ENCODE measurements at regions of chr14 and their contacts with region 1.

Region 1: DNA sequence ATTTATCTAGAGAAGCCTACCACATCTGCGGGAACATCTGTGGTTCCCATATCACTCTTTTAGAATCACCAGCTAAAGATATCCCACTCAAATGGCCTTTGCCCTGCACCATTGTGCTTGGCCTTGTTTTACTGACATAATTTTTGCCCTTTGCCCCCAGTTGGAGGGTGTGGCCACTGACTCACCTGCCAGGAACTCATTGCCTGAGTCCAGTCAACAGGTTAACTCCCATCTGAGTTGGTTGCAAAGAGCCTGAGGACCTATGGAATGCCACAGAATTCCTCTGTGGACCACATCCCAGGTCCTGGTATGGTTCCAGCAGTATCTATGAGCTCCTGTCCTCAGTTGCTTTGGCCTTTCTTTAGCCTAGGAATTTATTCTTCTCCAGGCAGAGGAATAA is 55.7 kb upstream of the PTGR2 start:
- DNase-seq: no peak
- CTCF ChIP-seq: no peak

Region 2: GRCh38 chr14:73809391-73809790 is 13.4 kb after region 1 on chr14:
- CTCF ChIA-PET with region 1: interaction called, 11 read pairs
- POLR2A ChIA-PET with region 1: no interaction called
- DNase-seq: no peak
- CTCF ChIP-seq: no peak

Region 3: DNA sequence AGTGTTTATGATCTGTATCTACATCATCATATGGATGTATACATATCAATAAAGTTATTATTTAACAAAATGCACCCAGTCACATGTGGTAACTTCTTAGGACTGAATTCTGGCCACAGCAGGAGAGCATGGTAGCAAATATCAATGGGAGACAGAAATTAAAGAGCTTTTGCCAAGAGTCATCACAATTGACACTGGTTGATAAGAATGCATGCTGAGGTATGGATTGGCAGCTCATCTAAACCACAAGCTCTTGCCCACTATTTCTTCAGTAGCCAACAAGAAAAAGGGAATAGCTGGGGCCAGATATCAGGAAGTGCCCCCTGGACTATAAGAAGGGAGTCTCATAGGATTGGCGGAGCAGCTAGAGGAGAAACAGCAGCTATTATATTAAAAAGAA is 46.2 kb after region 1 on chr14:
- CTCF ChIA-PET with region 1: no interaction called
- POLR2A ChIA-PET with region 1: no interaction called
- DNase-seq: no peak
- CTCF ChIP-seq: no peak